Posterior vena cava (tissue), 2 donors: ENCODE measurements at regions of chr10 and their contacts with region 1.

Region 1: DNA sequence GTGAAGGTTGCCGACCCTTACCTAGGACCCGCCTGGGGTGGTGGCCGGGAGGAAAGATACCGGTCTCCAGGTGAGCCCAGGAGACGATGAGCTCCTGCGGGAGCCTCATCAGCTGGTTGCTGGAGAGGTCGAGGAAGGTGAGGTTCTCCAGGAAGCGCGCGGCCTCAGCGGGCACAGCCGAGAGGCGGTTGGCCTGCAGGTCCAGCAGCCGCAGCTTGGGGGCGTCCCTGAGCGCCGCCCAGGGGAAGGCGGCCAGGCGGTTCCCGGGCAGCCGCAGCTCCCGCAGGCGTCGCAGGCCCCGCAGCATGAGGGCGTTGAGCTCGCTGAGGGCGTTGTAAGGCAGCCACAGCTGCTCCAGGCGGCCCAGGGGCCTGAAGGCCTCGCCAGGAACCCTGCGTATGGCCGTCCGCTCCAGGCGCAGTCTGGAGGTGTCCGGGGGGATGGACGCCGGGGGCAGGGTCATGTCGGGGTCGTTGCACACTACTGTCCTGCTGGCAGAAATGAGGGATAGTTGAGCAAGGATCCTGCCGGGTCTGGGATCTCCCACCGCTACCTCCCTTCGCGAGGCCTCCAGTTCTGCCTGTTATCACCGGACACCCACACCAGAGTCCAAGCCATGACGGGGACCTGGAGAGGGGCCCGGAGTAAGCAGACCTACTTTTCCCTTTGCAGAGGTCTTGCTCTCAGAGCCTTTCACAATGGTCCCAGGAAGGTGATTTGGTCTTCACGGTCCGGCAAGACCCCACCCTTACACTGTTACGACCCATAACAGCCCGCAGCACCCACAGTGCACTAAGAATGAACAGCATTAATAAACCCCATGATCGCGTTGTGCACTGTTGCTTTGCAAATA is 3.9 kb downstream of the LRIT1 start:
- DNase-seq: no peak

Region 2: DNA sequence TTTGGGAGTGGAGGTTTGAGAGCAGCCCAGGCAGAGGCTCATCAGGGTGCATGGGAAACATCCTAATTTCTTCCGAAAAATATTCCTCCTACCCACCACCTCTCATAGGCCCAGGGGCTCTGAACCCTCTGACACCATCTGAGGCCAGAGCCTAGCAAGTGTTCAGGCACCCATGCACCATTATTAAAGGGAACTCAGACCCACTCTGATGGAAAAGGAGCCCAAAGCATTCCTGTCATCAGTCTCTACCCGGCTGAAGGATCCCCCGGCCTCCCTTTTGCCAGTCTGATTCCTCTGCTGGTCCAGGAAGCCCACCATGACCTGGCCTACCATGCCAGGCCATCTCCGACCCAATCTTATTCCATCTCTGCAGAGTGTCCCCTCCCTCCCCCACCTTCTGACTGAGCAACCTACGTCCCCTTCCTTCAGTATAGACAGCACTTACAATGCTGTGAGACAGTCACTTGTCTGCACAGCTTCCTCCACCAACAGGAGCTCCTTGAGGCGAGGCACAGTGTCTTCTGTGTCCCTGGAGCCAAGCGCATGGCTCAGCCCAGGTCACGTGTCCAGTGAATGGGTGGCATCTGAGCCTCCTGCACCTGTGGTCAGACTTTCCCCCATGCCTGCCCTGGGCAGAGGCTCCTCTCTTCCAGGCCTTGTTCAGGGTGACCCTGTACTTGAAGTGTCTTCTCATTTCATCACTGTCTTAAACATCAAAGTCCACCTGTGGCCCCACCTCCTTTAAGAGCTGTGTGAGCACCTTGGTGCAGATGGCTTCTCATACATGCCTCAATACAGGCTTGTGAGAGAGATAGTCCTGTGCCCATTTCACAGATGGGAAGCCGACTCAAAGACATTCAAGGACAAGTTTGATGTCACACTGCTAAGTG is 64.7 kb before region 1 on chr10:
- intact Hi-C with region 1: no loop called
- DNase-seq: no peak

Region 3: GRCh38 chr10:84314275-84314674 is 76.8 kb after region 1 on chr10:
- intact Hi-C with region 1: loop called in 1 of 2 experiments (anchors 2 kb)
- DNase-seq: no peak

Region 4: GRCh38 chr10:86024281-86025041 is 1787.0 kb after region 1 on chr10:
- intact Hi-C with region 1: loop called in 1 of 2 experiments (anchors 5 kb)
- DNase-seq: no peak